Activated CD4-positive, alpha-beta T cell treated with anti-CD3 and anti-CD28 coated beads for 36 hours (primary cell): ENCODE measurements at regions of chr14 and their contacts with region 1.

Region 1: GRCh38 chr14:91872517-91873470 is 5.5 kb upstream of the TC2N start:
- DNase-seq: peak; percentile 51
- ATAC-seq: no peak
- H3K4me3 Mint-ChIP-seq: peak overlapping the region; percentile 67
- H3K27ac Mint-ChIP-seq: peak overlapping the region; percentile 94
- H3K4me1 Mint-ChIP-seq: peaks cover 93% of the 10 kb centered on the region
- H3K27me3 Mint-ChIP-seq: no peaks in the 10 kb centered on the region

Region 2: GRCh38 chr14:91883753-91884152 is 11.0 kb after region 1 on chr14:
- CTCF ChIA-PET with region 1: no interaction called
- POLR2A ChIA-PET with region 1: no interaction called
- intact Hi-C with region 1: loop called in 1 of 2 experiments (anchors 1 kb)
- DNase-seq: no peak
- ATAC-seq: no peak
- H3K4me3 Mint-ChIP-seq: no peak overlapping the region
- H3K27ac Mint-ChIP-seq: no peak overlapping the region
- H3K4me1 Mint-ChIP-seq: peaks cover 26% of the 10 kb centered on the region
- H3K27me3 Mint-ChIP-seq: no peaks in the 10 kb centered on the region

Region 3: GRCh38 chr14:91893007-91893406 is 20.2 kb after region 1 on chr14:
- CTCF ChIA-PET with region 1: interaction called, 4 read pairs
- POLR2A ChIA-PET with region 1: no interaction called
- intact Hi-C with region 1: loop called (anchors 1 to 2 kb)
- DNase-seq: peak; percentile 53
- ATAC-seq: peak; percentile 53
- H3K4me3 Mint-ChIP-seq: no peak overlapping the region
- H3K27ac Mint-ChIP-seq: peak overlapping the region; percentile 89
- H3K4me1 Mint-ChIP-seq: peaks cover 51% of the 10 kb centered on the region
- H3K27me3 Mint-ChIP-seq: no peaks in the 10 kb centered on the region

Region 4: DNA sequence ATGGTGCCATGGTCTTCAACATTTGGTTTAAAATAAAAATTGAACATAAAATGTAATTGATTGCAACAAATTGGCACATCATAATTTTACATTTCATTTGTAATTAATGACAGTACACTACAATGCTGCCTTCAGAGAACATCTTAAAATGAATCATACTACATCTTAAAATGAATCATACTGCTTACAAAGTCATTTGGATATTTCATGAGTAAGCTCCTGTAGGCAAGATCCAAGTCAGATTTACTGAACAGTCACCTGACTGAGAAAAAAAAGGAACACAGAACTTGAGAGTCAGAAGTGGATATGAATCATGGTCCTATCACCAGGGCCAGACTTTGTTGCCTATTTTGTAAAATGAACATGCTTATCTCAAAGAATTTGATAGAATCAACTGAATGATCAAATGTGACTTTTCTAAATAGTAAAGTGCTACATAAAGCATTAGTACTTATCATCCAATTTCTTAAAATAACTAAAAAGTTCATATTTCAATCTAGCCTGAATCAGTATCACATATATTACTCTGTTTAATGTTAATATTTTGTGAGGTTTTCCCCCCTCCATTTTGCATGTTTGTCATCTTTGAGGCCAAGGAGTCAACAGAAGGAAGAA is 107.4 kb after region 1 on chr14:
- CTCF ChIA-PET with region 1: no interaction called
- POLR2A ChIA-PET with region 1: no interaction called
- intact Hi-C with region 1: loop called in 1 of 2 experiments (anchors 5 kb)
- DNase-seq: peak; percentile 22
- ATAC-seq: peak; percentile 98
- H3K4me3 Mint-ChIP-seq: no peak overlapping the region
- H3K27ac Mint-ChIP-seq: peak overlapping the region; percentile 43
- H3K4me1 Mint-ChIP-seq: peaks cover 41% of the 10 kb centered on the region
- H3K27me3 Mint-ChIP-seq: no peaks in the 10 kb centered on the region

Region 5: DNA sequence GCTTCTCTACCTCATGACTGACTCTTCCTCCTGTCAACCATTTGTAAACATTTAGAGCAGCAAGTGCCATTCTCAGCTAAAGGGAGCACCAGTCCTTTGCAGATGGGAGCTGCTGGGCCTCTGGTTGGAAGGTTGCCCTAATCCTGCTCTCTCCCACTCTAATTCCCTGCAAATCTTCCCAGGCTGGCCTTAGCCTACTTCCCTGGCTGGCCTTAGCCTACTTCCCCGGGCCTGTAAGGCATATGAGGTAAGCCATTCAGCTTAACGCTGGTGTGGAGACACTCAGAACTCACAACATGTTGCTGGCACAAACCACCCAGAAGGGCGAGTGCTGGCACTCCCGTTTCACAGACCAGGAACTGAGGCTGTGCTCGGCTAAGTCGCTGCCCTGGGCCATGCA is 318.0 kb after region 1 on chr14:
- CTCF ChIA-PET with region 1: no interaction called
- POLR2A ChIA-PET with region 1: no interaction called
- intact Hi-C with region 1: no loop called
- DNase-seq: no peak
- ATAC-seq: no peak
- H3K4me3 Mint-ChIP-seq: no peak overlapping the region
- H3K27ac Mint-ChIP-seq: no peak overlapping the region
- H3K4me1 Mint-ChIP-seq: no peaks in the 10 kb centered on the region
- H3K27me3 Mint-ChIP-seq: no peaks in the 10 kb centered on the region

Region 6: GRCh38 chr14:93086441-93087055 is 1213.8 kb after region 1 on chr14:
- CTCF ChIA-PET with region 1: no interaction called
- POLR2A ChIA-PET with region 1: no interaction called
- intact Hi-C with region 1: no loop called
- DNase-seq: no peak
- ATAC-seq: peak; percentile 52
- H3K4me3 Mint-ChIP-seq: no peak overlapping the region
- H3K27ac Mint-ChIP-seq: peak overlapping the region; percentile 31
- H3K4me1 Mint-ChIP-seq: peaks cover 21% of the 10 kb centered on the region
- H3K27me3 Mint-ChIP-seq: no peaks in the 10 kb centered on the region